Transverse colon (tissue), 4 donors: ENCODE measurements at regions of chr2 and their contacts with region 1.

Region 1: DNA sequence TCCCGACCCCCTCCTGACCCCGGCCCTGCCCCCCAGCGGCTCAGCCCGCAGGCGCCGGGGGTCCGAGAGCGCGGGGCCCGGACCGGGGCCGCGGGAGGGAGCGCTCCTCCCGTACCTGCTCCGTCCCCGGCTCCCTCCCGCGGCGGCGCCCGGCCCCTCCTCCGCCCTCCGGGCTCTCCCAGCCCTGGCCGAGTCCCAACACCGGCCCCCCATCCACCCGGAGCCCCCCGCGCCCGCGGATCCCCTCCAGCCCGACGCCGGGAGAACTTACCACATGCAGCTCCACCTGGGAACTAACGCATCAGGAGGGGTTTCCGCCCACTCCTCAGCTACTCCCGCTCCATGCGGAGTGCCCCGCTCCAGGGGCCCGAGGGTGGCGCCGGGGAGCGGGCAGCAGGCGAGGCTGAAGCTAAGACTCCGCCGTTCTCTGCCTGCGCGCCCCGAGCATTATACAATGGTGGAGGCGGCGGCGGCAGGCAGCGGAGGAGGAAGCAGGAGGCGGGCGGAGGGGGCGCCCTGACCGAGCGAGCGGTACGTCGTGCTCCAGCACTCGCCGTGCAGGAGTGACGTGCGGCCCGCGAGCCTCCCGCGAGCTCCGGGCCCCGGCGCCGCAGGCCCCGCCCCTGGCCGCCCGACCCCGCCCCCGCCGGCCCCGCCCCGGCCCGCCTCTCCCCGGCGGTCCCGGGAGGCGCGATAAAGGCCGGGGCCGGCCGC is at the start of gene SERTAD2:
- DNase-seq: peak; percentile 91
- H3K4me3 ChIP-seq: peak within 1 kb of the TSS; percentile 78 to 99 (median 90)
- H3K27ac ChIP-seq: peak within 1 kb of the TSS; percentile 98 to 100 (median 100)
- H3K4me1 ChIP-seq: peaks cover 33 to 51% (median 48%) of the 10 kb centered on the region in 4 donors
- H3K27me3 ChIP-seq: no peaks in the 10 kb centered on the region
- CTCF ChIP-seq: peak in 1 of 5 experiments; percentile 2
- EP300 ChIP-seq: no peak
- POLR2A ChIP-seq: peak; percentile 97
- total RNA-seq, gene SERTAD2: 5.4 to 22.1 (median 13.2) TPM

Region 2: DNA sequence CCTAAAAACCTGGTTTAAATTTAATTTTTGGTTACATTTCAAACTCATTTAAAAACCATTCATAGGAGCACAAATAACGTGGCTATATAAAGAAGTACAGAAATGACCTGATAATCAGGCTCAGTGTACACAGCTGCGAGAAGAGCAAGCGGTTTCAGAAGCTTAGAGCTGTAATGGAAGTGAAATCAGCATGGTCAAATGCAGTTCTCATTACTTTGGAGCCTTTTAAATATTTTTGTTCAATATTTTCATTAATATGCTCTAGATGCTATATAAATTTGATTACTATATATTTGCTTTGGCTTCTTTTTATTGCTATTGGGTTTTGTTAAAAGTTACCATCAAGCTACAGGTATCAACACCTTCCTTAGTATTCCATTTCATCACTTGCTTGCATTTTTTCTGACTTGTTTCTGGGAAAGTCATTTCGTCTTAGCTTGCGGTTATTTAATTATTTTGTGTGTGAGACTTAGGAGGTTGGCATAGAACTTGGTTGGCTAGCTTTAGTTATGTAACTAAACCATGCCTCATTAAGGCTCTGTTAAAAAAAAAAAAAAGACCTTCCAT is 70.6 kb before region 1 on chr2:
- in situ Hi-C with region 1: no loop called
- intact Hi-C with region 1: no loop called
- DNase-seq: no peak
- H3K4me3 ChIP-seq: no peak overlapping the region
- H3K27ac ChIP-seq: no peak overlapping the region
- H3K4me1 ChIP-seq: peaks cover 0 to 7% (median 0%) of the 10 kb centered on the region in 4 donors
- H3K27me3 ChIP-seq: no peaks in the 10 kb centered on the region
- CTCF ChIP-seq: no peak
- EP300 ChIP-seq: no peak
- POLR2A ChIP-seq: no peak

Region 3: DNA sequence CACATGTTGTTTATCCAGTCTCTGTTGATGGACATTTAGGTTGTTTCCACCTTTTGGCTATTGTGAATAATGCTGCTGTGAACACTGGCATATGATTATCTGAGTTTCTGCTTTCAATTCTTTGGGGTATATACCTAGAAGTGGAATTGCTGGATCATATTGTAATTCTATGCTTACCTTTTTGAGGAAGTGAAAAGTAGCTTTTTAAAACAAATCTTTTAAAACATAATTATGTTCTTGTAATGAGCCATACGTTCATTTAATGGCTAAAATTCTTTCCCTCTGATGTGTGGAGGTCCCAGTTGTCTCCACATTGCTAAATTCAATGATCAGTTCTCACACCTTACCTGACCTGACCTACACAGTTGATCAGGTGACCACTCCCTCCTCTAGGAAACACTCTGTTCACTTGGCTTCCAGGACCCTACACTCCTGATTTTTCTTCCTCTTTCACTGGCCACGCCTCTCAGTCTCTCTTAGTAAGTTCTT is 28.0 kb after region 1 on chr2:
- in situ Hi-C with region 1: no loop called
- intact Hi-C with region 1: loop called (anchors 1 kb)
- DNase-seq: no peak
- H3K4me3 ChIP-seq: no peak overlapping the region
- H3K27ac ChIP-seq: no peak overlapping the region
- H3K4me1 ChIP-seq: peaks cover 0 to 33% (median 0%) of the 10 kb centered on the region in 4 donors
- H3K27me3 ChIP-seq: no peaks in the 10 kb centered on the region
- CTCF ChIP-seq: no peak
- EP300 ChIP-seq: no peak
- POLR2A ChIP-seq: no peak

Region 4: GRCh38 chr2:64859312-64860212 is 206.1 kb after region 1 on chr2:
- in situ Hi-C with region 1: loop called in 2 of 4 experiments (anchors 5 to 10 kb)
- intact Hi-C with region 1: loop called (anchors 2 kb)
- DNase-seq: peak; percentile 94
- H3K4me3 ChIP-seq: peak overlapping the region; percentile 5 to 53 (median 38)
- H3K27ac ChIP-seq: peak overlapping the region; percentile 95 to 97 (median 96)
- H3K4me1 ChIP-seq: peaks cover 22 to 50% (median 37%) of the 10 kb centered on the region in 4 donors
- H3K27me3 ChIP-seq: no peaks in the 10 kb centered on the region
- CTCF ChIP-seq: peak in 2 of 5 experiments; percentile 18 to 40
- EP300 ChIP-seq: no peak
- POLR2A ChIP-seq: peak; percentile 70

Region 5: DNA sequence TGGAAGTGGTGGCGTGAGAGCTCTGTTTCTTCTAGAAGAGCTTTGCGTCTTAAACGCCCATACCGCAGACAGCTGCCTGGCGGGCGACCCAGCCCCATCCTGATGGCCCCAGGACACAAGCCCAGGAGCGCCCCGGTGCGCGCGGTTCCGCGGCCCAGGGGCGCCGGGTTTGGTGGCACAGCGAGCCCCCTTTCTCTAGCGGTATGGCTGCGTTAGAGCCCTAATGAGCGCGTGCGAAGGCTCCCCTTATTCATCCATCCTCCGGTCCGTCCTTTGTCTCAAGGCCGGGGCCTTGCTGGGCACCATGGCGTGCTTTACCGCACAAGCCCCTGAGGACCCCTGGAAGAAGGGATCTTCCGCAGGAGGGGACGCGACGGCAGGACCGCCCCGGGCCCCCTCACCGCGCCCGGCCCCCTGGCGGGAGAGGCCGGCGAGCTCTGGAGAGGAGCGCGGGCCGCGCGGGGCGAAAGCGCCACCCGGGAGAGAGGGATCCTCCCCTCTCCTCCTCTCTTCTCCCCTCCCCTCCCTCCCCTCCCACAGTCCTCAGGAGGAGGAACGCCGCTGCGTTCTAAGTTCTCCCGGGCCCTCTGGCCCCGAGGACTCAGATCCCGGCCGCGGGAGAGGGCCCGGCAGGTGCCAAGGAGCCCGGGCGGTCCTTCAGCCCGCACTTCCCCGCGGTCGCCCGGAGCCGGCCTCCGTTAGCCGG is 335.1 kb after region 1 on chr2:
- in situ Hi-C with region 1: no loop called
- intact Hi-C with region 1: loop called (anchors 5 kb)
- DNase-seq: peak; percentile 79
- H3K4me3 ChIP-seq: peak overlapping the region; percentile 59 to 88 (median 81)
- H3K27ac ChIP-seq: peak overlapping the region; percentile 94 to 98 (median 96)
- H3K4me1 ChIP-seq: peaks cover 6 to 34% (median 24%) of the 10 kb centered on the region in 4 donors
- H3K27me3 ChIP-seq: no peaks in the 10 kb centered on the region
- CTCF ChIP-seq: peak; percentile 42 to 67 (median 55)
- EP300 ChIP-seq: no peak
- POLR2A ChIP-seq: peak; percentile 62